AG04449 (cell line): ENCODE measurements at regions of chr1 and their contacts with region 1.

Region 1: GRCh38 chr1:33295450-33296081 is 25.3 kb downstream of the A3GALT2 start:
- DNase-seq: no peak
- H3K4me3 ChIP-seq: no peak overlapping the region
- CTCF ChIP-seq: peak; percentile 94

Region 2: GRCh38 chr1:33219881-33220661 is 75.5 kb before region 1 on chr1:
- CTCF ChIA-PET with region 1: interaction called, 16 read pairs
- POLR2A ChIA-PET with region 1: no interaction called
- DNase-seq: no peak
- H3K4me3 ChIP-seq: no peak overlapping the region
- CTCF ChIP-seq: no peak

Region 3: DNA sequence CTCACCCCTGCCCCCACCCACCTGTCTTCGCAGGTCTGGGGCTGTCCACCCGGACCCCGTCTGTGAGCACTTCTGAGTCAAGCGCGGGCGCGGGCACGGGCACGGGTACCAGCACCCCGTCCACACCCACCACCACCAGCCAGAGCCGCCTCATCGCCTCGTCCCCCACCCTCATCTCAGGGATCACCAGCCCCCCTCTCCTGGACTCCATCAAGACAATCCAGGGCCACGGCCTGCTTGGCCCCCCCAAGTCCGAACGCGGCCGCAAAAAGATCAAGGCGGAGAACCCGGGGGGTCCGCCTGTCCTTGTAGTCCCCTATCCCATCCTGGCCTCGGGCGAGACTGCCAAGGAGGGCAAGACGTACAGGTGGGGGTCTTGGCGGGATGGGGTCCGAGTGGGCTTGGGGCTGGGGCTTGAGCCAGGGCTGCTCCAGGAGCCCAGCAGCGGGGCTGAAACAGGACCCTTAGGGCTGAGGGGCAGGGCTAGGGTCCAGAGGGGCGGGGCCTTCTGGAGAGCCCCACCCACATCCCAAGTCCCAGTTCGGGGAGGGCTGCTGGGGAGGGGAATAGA is 15.4 kb before region 1 on chr1:
- CTCF ChIA-PET with region 1: interaction called, 110 read pairs
- POLR2A ChIA-PET with region 1: no interaction called
- DNase-seq: no peak
- H3K4me3 ChIP-seq: no peak overlapping the region
- CTCF ChIP-seq: no peak

Region 4: GRCh38 chr1:33319949-33320605 is 24.5 kb after region 1 on chr1:
- CTCF ChIA-PET with region 1: interaction called, 26 read pairs
- POLR2A ChIA-PET with region 1: no interaction called
- DNase-seq: no peak
- H3K4me3 ChIP-seq: no peak overlapping the region
- CTCF ChIP-seq: no peak

Region 5: GRCh38 chr1:33367485-33368405 is 72.2 kb after region 1 on chr1:
- CTCF ChIA-PET with region 1: interaction called, 203 read pairs
- POLR2A ChIA-PET with region 1: no interaction called
- DNase-seq: no peak
- H3K4me3 ChIP-seq: no peak overlapping the region
- CTCF ChIP-seq: peak; percentile 97

Region 6: GRCh38 chr1:33460947-33461629 is 165.5 kb after region 1 on chr1:
- CTCF ChIA-PET with region 1: interaction called, 436 read pairs
- POLR2A ChIA-PET with region 1: no interaction called
- DNase-seq: no peak
- H3K4me3 ChIP-seq: no peak overlapping the region
- CTCF ChIP-seq: no peak

Region 7: DNA sequence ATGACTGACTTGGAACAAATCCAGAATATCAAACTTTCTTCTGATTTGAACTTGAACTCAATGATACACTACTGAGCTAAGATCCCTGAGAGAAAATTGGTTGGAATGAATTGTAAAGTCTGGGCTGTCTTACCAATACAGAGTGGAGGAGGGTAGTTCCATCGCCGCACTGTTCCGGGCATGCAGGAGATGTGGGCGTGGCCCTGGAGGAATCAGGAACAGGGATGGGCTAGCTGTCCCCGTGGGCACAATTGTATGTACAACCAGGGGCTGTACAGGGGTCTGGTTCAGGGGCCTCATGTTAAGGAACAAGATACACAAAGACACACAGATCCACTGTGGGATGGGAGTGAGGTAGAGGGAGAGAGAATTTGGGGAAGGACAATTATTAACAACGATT is 321.2 kb after region 1 on chr1:
- CTCF ChIA-PET with region 1: interaction called, 39 read pairs
- POLR2A ChIA-PET with region 1: no interaction called
- DNase-seq: no peak
- H3K4me3 ChIP-seq: no peak overlapping the region
- CTCF ChIP-seq: no peak